ENCODE measurements at regions of chr3 and their contacts with region 1.

Region 1: GRCh38 chr3:184525337-184526087 is 36.1 kb upstream of the EPHB3 start:
- DNase-seq: no peak
- H3K4me3 Mint-ChIP-seq: peak overlapping the region; percentile 82
- H3K27ac Mint-ChIP-seq: peak overlapping the region; percentile 71
- H3K4me1 Mint-ChIP-seq: peaks cover 21% of the 10 kb centered on the region
- H3K27me3 Mint-ChIP-seq: peaks cover 37% of the 10 kb centered on the region

Region 2: GRCh38 chr3:183825456-183826161 is 699.9 kb before region 1 on chr3 and contains the start of gene MAP6D1:
- intact Hi-C with region 1: no loop called
- DNase-seq: peak; percentile 5
- H3K4me3 Mint-ChIP-seq: peak within 1 kb of the TSS; percentile 78
- H3K27ac Mint-ChIP-seq: peak within 1 kb of the TSS; percentile 8
- H3K4me1 Mint-ChIP-seq: peaks cover 9% of the 10 kb centered on the region
- H3K27me3 Mint-ChIP-seq: peaks cover 11% of the 10 kb centered on the region
- total RNA-seq, gene MAP6D1: 2.1 and 2.2 TPM in 2 replicates

Region 3: DNA sequence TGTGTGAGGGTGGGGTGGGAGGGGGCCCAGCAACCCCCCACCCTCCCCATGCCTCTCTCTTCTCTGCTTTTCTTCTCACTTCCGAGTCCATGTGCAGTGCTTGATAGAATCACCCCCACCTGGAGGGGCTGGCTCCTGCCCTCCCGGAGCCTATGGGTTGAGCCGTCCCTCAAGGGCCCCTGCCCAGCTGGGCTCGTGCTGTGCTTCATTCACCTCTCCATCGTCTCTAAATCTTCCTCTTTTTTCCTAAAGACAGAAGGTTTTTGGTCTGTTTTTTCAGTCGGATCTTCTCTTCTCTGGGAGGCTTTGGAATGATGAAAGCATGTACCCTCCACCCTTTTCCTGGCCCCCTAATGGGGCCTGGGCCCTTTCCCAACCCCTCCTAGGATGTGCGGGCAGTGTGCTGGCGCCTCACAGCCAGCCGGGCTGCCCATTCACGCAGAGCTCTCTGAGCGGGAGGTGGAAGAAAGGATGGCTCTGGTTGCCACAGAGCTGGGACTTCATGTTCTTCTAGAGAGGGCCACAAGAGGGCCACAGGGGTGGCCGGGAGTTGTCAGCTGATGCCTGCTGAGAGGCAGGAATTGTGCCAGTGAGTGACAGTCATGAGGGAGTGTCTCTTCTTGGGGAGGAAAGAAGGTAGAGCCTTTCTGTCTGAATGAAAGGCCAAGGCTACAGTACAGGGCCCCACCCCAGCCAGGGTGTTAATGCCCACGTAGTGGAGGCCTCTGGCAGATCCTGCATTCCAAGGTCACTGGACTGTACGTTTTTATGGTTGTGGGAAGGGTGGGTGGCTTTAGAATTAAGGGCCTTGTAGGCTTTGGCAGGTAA is 180.0 kb before region 1 on chr3:
- intact Hi-C with region 1: no loop called
- DNase-seq: no peak
- H3K4me3 Mint-ChIP-seq: no peak overlapping the region
- H3K27ac Mint-ChIP-seq: no peak overlapping the region
- H3K4me1 Mint-ChIP-seq: peaks cover 11% of the 10 kb centered on the region
- H3K27me3 Mint-ChIP-seq: no peaks in the 10 kb centered on the region

Region 4: GRCh38 chr3:184417619-184418327 is 107.7 kb before region 1 on chr3:
- intact Hi-C with region 1: loop called (anchors 5 kb)
- DNase-seq: peak; percentile 43
- H3K4me3 Mint-ChIP-seq: no peak overlapping the region
- H3K27ac Mint-ChIP-seq: no peak overlapping the region
- H3K4me1 Mint-ChIP-seq: no peaks in the 10 kb centered on the region
- H3K27me3 Mint-ChIP-seq: peaks cover 5% of the 10 kb centered on the region